ENCODE measurements at regions of chr2 and their contacts with region 1.

Region 1: DNA sequence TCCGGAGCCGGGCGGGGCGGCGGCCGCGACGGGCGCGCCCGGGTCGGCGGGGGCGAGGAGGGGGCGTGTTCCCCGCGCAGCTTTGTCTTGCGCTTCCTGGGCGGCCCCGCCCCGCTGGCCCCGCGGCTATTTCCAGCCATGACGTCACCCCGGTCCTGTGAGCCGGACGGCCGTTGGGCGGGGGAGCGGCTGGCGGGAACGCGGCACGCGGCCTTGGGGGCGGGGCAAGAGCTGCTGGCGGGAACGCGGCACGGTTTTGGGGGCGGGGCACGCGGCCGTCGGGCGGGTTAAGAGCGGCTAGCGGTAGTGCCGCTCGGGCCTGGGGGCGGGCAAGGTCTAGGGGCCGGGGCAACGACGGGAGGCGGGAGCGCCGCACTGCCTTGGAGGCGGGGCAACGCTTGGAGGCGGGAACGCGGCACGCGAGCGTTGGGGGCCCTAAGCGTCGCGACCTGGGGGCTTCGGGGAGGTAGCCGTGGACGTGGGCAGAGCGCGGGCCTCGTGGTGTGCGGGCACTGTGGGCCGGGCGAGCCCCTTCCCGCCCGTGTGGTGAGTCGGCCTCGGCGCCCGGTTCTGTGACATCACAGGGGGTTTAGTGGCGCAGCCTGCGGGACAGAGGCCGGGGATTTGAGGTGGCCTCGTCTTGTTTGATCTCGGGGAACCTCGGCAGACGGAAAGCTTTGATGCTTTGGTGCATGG is 704 bp downstream of the KLF11 start:
- DNase-seq: peak; percentile 98
- H3K4me3 ChIP-seq: peak overlapping the region; percentile 59 to 68
- H3K27ac ChIP-seq: peak overlapping the region; percentile 58 to 77; a peak in 2 of 4 replicates
- H3K4me1 ChIP-seq: peaks cover 6 to 22% of the 10 kb centered on the region in 2 experiments; a peak in 1 of 4 replicates
- H3K27me3 ChIP-seq: no peaks in the 10 kb centered on the region
- CTCF ChIP-seq: no peak
- EP300 ChIP-seq: no peak
- RAD21 ChIP-seq: no peak

Region 2: GRCh38 chr2:9720352-9721093 is 323.5 kb before region 1 on chr2:
- CTCF ChIA-PET with region 1: no interaction called
- POLR2A ChIA-PET with region 1: no interaction called
- DNase-seq: no peak
- H3K4me3 ChIP-seq: no peak overlapping the region
- H3K27ac ChIP-seq: no peak overlapping the region
- H3K4me1 ChIP-seq: peaks cover 0 to 2% of the 10 kb centered on the region in 2 experiments; a peak in 1 of 4 replicates
- H3K27me3 ChIP-seq: no peaks in the 10 kb centered on the region
- CTCF ChIP-seq: no peak
- EP300 ChIP-seq: no peak
- RAD21 ChIP-seq: no peak

Region 3: DNA sequence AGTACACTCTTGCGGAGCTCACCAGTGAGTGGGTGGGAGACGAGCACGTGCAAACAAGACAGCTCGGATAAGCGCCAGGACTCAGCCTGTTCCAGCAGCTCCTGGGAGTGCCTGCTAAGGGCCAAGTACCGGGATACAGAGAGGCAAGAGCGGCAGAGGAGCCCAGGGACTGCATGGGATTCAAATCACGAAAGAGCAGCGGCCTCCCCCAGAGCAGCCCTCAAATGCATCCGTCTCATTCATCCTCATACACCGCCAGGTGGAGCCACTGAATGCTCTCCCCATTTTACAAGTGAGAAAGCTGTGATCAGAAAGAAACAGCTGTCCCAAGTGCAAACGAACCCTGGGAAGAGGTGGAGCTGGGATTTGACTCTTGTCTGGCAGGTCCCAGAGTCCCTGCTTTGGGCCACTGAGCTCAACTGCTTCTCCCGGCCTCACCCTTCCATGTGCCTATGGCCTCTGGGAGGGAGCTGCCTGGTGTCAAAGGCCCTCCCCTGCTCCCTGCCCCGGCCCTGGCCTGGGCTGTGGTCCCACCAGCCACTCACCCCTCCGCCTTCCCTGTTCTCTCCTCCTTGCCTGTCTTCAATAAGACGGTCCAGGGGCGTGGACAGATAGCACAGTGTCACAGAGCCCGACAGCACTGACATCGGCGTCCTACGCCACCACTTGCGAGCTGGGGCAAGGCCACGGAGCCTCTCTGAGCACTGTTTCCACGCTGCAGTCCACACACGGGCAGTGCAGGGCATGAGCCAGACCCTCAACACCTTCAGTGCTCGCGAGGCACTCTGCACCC is 273.6 kb before region 1 on chr2:
- CTCF ChIA-PET with region 1: interaction called, 34 read pairs
- POLR2A ChIA-PET with region 1: interaction called, 3 read pairs
- DNase-seq: peak; percentile 79
- H3K4me3 ChIP-seq: no peak overlapping the region
- H3K27ac ChIP-seq: peak overlapping the region in 1 of 2 experiments; percentile 28; a peak in 1 of 4 replicates
- H3K4me1 ChIP-seq: peaks cover 5 to 32% of the 10 kb centered on the region in 2 experiments; a peak in 2 of 4 replicates
- H3K27me3 ChIP-seq: no peaks in the 10 kb centered on the region
- CTCF ChIP-seq: peak; percentile 73
- EP300 ChIP-seq: no peak
- RAD21 ChIP-seq: peak; percentile 57

Region 4: GRCh38 chr2:9990735-9991134 is 53.3 kb before region 1 on chr2:
- CTCF ChIA-PET with region 1: interaction called, 357 read pairs
- POLR2A ChIA-PET with region 1: interaction called, 3 read pairs
- DNase-seq: no peak
- H3K4me3 ChIP-seq: no peak overlapping the region
- H3K27ac ChIP-seq: no peak overlapping the region
- H3K4me1 ChIP-seq: peaks cover 13 to 27% of the 10 kb centered on the region in 2 experiments; a peak in 2 of 4 replicates
- H3K27me3 ChIP-seq: no peaks in the 10 kb centered on the region
- CTCF ChIP-seq: no peak
- EP300 ChIP-seq: no peak
- RAD21 ChIP-seq: no peak

Region 5: DNA sequence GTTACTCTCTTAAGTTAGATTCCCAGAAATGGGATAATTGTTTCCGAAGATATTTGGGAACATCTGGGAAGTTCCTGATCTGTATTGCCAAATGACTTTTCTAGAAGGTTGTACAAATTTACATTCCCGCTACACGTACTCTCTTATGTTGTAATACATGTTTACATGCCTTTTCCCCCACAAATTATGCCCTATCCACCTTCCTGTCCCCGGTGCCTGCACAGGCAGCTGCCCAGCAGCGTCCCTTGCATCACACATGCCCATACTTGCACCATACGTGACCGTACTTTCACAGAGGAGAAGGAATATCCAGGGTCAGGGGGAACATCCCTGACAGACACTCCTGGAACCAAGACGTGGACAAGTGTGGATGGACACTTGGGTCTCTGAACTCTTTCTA is 24.9 kb before region 1 on chr2:
- CTCF ChIA-PET with region 1: interaction called, 11 read pairs
- POLR2A ChIA-PET with region 1: interaction called, 4 read pairs
- DNase-seq: no peak
- H3K4me3 ChIP-seq: no peak overlapping the region
- H3K27ac ChIP-seq: no peak overlapping the region; a peak in 1 of 4 replicates
- H3K4me1 ChIP-seq: peaks cover 0 to 8% of the 10 kb centered on the region in 2 experiments; a peak in 2 of 4 replicates
- H3K27me3 ChIP-seq: peaks cover 6% of the 10 kb centered on the region; the same call in 1 of the 2 replicates
- CTCF ChIP-seq: no peak
- EP300 ChIP-seq: no peak
- RAD21 ChIP-seq: no peak

Region 6: GRCh38 chr2:10057231-10058107 is 13.4 kb after region 1 on chr2:
- CTCF ChIA-PET with region 1: interaction called, 52 read pairs
- POLR2A ChIA-PET with region 1: no interaction called
- DNase-seq: peak; percentile 58
- H3K4me3 ChIP-seq: no peak overlapping the region
- H3K27ac ChIP-seq: no peak overlapping the region
- H3K4me1 ChIP-seq: peaks cover 0 to 23% of the 10 kb centered on the region in 2 experiments; a peak in 1 of 4 replicates
- H3K27me3 ChIP-seq: no peaks in the 10 kb centered on the region
- CTCF ChIP-seq: no peak
- EP300 ChIP-seq: no peak
- RAD21 ChIP-seq: no peak

Region 7: GRCh38 chr2:10239561-10239967 is 195.5 kb after region 1 on chr2:
- CTCF ChIA-PET with region 1: no interaction called
- POLR2A ChIA-PET with region 1: no interaction called
- DNase-seq: no peak
- H3K4me3 ChIP-seq: no peak overlapping the region
- H3K27ac ChIP-seq: no peak overlapping the region
- H3K4me1 ChIP-seq: peaks cover 0 to 5% of the 10 kb centered on the region in 2 experiments; a peak in 1 of 4 replicates
- H3K27me3 ChIP-seq: no peaks in the 10 kb centered on the region; the same call in 1 of the 2 replicates
- CTCF ChIP-seq: no peak
- EP300 ChIP-seq: no peak
- RAD21 ChIP-seq: no peak

Region 8: DNA sequence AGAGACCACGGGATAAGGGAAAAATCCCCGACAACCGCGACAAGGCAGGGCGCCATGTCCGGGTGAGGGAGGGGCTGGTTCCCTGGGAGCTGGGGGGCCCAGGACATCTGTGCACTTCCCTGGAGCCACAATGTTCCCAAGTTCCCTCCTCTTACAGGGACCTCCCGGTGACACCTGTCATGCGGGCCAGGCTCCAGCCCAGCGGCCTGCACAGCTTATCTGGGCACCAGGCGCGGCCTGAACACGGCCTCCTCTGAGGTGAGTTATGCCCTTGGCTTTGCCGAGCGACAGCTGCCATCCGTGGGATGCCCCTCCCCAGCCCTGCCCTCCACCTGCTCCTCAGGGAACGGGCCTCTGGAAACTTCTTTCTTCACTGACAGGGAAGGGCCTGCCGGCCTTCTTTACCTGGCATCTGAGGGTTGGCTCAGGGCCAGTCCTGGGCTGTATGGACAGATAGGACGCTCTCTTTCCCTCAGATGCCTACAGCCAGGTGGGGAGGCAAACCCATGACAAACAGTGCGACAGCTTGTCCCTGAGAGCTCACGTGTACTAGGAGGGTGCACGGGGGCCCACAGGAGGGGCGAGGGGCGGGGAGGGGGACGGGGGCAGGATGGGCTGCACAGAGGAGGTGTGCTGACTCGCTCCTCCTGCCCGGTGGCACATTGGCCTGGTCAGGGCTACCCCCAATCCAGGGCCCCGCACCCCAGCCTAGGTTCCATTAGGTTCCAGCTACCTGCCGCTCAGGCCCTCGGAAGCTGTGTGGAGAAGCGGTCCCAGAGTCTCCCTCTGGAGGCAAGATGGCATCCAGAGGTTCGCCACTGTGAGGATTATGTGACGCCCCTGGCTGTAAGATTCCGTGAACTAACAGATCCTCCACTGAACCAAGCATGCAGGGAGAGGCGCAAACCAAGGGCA is 223.8 kb after region 1 on chr2:
- CTCF ChIA-PET with region 1: no interaction called
- POLR2A ChIA-PET with region 1: no interaction called
- DNase-seq: no peak
- H3K4me3 ChIP-seq: no peak overlapping the region
- H3K27ac ChIP-seq: no peak overlapping the region
- H3K4me1 ChIP-seq: peaks cover 4 to 7% of the 10 kb centered on the region in 2 experiments; a peak in 2 of 4 replicates
- H3K27me3 ChIP-seq: no peaks in the 10 kb centered on the region
- CTCF ChIP-seq: no peak
- EP300 ChIP-seq: no peak
- RAD21 ChIP-seq: no peak

Region 9: DNA sequence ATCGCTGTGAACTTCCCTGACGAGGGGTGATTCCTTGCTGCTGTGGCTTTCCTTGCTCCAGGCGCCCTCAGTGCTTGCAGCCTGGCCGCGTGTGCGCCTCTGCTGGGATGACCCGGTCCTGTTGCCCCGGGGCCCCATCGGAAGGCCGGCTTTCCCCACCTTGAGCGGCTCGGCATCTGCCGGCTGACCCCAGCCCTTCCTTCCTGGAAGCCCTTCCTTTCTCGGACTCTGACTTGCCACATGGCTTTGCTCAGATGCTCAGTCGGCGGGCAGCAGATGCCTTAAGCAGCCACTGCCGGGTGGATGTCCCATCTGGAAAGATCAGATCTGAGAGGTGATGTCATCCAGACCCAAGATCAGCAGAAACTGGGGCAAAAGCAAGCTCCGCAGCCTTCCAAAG is 504.6 kb after region 1 on chr2:
- CTCF ChIA-PET with region 1: no interaction called
- POLR2A ChIA-PET with region 1: no interaction called
- DNase-seq: peak; percentile 93
- H3K4me3 ChIP-seq: peak overlapping the region in 1 of 2 experiments; percentile 7; a peak in 1 of 4 replicates
- H3K27ac ChIP-seq: peak overlapping the region in 1 of 2 experiments; percentile 29; a peak in 1 of 4 replicates
- H3K4me1 ChIP-seq: peaks cover 0 to 33% of the 10 kb centered on the region in 2 experiments; a peak in 2 of 4 replicates
- H3K27me3 ChIP-seq: no peaks in the 10 kb centered on the region
- CTCF ChIP-seq: no peak
- EP300 ChIP-seq: peak in 1 of 2 experiments; percentile 74; a peak in 1 of 4 replicates
- RAD21 ChIP-seq: no peak

Measured in SK-N-SH (cell line).